Activated T-helper 1 cell treated with anti-CD3 and anti-CD28 coated beads, Interleukin-12 subunit alpha, Interleukin-12 subunit beta, Interleukin-2, Interleukin-4 antibody, amounts not matched to agents 30 ng/mL and 10 ng/mL and 1 ng/mL, durations not matched to agents 14 hours and 24 hours and 36 hours (primary cell): ENCODE measurements at regions of chr5 and their contacts with region 1.

Region 1: GRCh38 chr5:180605554-180606214 is 14.4 kb upstream of the SCGB3A1 start:
- DNase-seq: peak; percentile 32
- H3K4me3 Mint-ChIP-seq: no peak overlapping the region
- H3K27ac Mint-ChIP-seq: no peak overlapping the region
- H3K4me1 Mint-ChIP-seq: no peaks in the 10 kb centered on the region
- H3K27me3 Mint-ChIP-seq: peaks cover 3% of the 10 kb centered on the region

Region 2: DNA sequence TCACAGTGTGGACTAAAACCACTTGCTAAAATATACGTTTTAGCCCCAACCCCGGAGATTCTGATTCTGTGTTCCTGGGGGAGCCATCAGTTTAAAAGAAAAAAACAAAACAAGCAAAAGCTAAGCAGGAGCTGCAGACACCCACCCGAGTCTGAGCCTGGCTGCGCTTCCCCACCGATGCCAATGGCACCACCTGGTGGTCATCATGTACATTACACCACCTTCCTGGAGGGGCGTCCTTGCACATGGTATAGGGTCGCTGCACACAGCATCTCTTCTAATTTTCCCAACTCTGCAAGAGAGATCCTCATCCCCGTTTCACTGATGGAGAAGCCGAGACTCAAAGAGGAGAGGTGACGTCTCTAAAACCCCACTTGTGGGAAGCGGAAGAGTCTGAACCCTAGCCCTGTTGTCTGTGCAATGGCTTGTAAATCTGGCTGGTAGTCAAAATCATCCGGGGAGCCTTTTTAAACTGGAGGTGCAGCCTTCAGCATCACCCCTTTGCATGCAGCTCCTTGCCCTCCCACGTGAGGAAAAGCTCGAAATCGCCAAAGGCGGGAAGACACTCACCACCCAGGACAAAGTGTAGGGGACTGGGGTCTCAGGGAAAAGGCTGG is 134.6 kb before region 1 on chr5:
- intact Hi-C with region 1: loop called (anchors 1 kb)
- DNase-seq: peak; percentile 20
- H3K4me3 Mint-ChIP-seq: no peak overlapping the region
- H3K27ac Mint-ChIP-seq: no peak overlapping the region
- H3K4me1 Mint-ChIP-seq: no peaks in the 10 kb centered on the region
- H3K27me3 Mint-ChIP-seq: peaks cover 7% of the 10 kb centered on the region